ENCODE measurements at regions of chr14 and their contacts with region 1.

Region 1: GRCh38 chr14:65287264-65288131 is 125.0 kb upstream of the FUT8 start:
- DNase-seq: peak in 8 of 9 experiments; percentile 34 to 83 (median 52)
- ATAC-seq: peak; percentile 77
- H3K4me3 ChIP-seq: peak overlapping the region; percentile 26 to 28
- H3K4me3 Mint-ChIP-seq: peak overlapping the region; percentile 80
- H3K27ac ChIP-seq: peak overlapping the region; percentile 52 to 78
- H3K27ac Mint-ChIP-seq: peak overlapping the region; percentile 99
- H3K4me1 ChIP-seq: peaks cover 70% of the 10 kb centered on the region
- H3K4me1 Mint-ChIP-seq: peaks cover 74% of the 10 kb centered on the region
- H3K27me3 ChIP-seq: no peaks in the 10 kb centered on the region
- H3K27me3 Mint-ChIP-seq: no peaks in the 10 kb centered on the region
- CTCF ChIP-seq: no peak

Region 2: DNA sequence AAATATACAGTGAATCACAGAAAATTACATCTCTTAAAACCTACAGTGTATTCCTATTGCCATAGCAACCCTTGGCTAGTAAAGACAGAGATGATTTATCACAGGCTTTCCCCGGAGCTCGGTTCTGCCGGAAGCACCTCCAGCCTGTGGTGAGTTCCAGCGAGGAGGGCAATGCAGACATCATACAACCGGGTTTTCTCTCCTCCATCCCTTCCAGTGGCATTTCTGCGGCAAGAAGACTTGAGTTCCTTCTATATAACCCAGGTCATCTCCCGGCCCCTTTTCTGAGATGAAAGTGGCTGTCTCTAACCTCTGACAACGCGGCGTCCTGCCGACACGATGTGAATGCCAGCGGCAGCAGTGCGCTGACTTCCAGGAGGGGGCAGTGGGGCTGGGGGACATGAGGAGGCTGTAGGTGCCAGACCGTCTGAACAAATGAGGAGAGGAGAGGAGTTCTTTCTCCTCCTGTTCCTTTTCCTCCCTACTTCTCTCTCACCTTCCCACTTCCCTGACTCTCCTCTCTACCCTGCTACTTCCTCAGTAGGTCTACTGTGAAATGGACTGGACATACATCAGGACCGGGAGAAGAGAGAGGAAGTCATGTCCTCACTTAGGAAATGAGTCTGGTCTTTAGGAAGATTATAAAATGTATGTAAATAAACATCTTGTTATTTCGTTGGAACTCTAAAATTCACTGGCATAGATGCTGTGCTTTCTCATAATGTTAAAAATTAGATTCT is 116.6 kb before region 1 on chr14:
- CTCF ChIA-PET with region 1: no interaction called
- POLR2A ChIA-PET with region 1: no interaction called
- intact Hi-C with region 1: no loop called
- DNase-seq: peak in 8 of 9 experiments; percentile 9 to 53 (median 24)
- ATAC-seq: peak; percentile 56
- H3K4me3 ChIP-seq: peak overlapping the region; percentile 13 to 15
- H3K4me3 Mint-ChIP-seq: peak overlapping the region; percentile 77
- H3K27ac ChIP-seq: no peak overlapping the region
- H3K27ac Mint-ChIP-seq: no peak overlapping the region
- H3K4me1 ChIP-seq: no peaks in the 10 kb centered on the region
- H3K4me1 Mint-ChIP-seq: peaks cover 11% of the 10 kb centered on the region
- H3K27me3 ChIP-seq: peaks cover 0 to 2% of the 10 kb centered on the region in 2 experiments
- H3K27me3 Mint-ChIP-seq: peaks cover 15% of the 10 kb centered on the region
- CTCF ChIP-seq: no peak

Region 3: DNA sequence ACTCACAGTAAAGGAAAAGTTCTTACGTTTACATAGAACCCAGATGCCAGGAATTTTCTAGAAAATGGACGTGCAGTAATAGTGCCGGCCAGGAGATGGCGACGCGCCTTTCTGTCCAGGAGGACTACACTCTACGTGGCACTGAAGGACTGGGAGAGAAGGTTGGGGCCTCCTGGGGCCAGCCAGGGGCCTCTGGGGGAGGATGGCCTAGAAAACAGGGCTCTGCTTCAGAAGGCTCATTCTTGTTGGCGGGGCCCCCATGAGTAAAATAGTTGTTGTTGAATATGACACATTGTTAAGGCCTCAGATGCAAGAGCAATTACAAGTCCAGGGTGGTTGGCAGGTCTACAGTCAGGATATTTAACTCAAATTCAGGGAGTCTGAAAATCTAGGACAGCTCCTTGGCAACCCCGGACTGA is 65.0 kb before region 1 on chr14:
- CTCF ChIA-PET with region 1: no interaction called
- POLR2A ChIA-PET with region 1: no interaction called
- intact Hi-C with region 1: loop called in 1 of 2 experiments (anchors 5 kb)
- DNase-seq: peak; percentile 12 to 72 (median 53)
- ATAC-seq: peak; percentile 79
- H3K4me3 ChIP-seq: no peak overlapping the region
- H3K4me3 Mint-ChIP-seq: no peak overlapping the region
- H3K27ac ChIP-seq: no peak overlapping the region
- H3K27ac Mint-ChIP-seq: no peak overlapping the region
- H3K4me1 ChIP-seq: peaks cover 8% of the 10 kb centered on the region
- H3K4me1 Mint-ChIP-seq: peaks cover 18% of the 10 kb centered on the region
- H3K27me3 ChIP-seq: no peaks in the 10 kb centered on the region
- H3K27me3 Mint-ChIP-seq: no peaks in the 10 kb centered on the region
- CTCF ChIP-seq: peak; percentile 88

Region 4: GRCh38 chr14:65267856-65268255 is 19.6 kb before region 1 on chr14:
- CTCF ChIA-PET with region 1: no interaction called
- POLR2A ChIA-PET with region 1: no interaction called
- intact Hi-C with region 1: loop called in 1 of 2 experiments (anchors 1 kb)
- DNase-seq: no peak
- ATAC-seq: no peak
- H3K4me3 ChIP-seq: no peak overlapping the region
- H3K4me3 Mint-ChIP-seq: no peak overlapping the region
- H3K27ac ChIP-seq: no peak overlapping the region
- H3K27ac Mint-ChIP-seq: no peak overlapping the region
- H3K4me1 ChIP-seq: peaks cover 17% of the 10 kb centered on the region
- H3K4me1 Mint-ChIP-seq: peaks cover 27% of the 10 kb centered on the region
- H3K27me3 ChIP-seq: no peaks in the 10 kb centered on the region
- H3K27me3 Mint-ChIP-seq: no peaks in the 10 kb centered on the region
- CTCF ChIP-seq: no peak

Region 5: GRCh38 chr14:65302571-65303189 is 15.2 kb after region 1 on chr14:
- CTCF ChIA-PET with region 1: interaction called, 4 read pairs
- POLR2A ChIA-PET with region 1: interaction called, 6 read pairs
- intact Hi-C with region 1: loop called in 1 of 2 experiments (anchors 2 kb)
- DNase-seq: peak in 2 of 9 experiments; percentile 29 to 50
- ATAC-seq: peak; percentile 64
- H3K4me3 ChIP-seq: no peak overlapping the region
- H3K4me3 Mint-ChIP-seq: peak overlapping the region; percentile 37
- H3K27ac ChIP-seq: no peak overlapping the region
- H3K27ac Mint-ChIP-seq: peak overlapping the region; percentile 77
- H3K4me1 ChIP-seq: peaks cover 37% of the 10 kb centered on the region
- H3K4me1 Mint-ChIP-seq: peaks cover 62% of the 10 kb centered on the region
- H3K27me3 ChIP-seq: no peaks in the 10 kb centered on the region
- H3K27me3 Mint-ChIP-seq: no peaks in the 10 kb centered on the region
- CTCF ChIP-seq: no peak